ENCODE measurements at regions of chr19 and their contacts with region 1.

Region 1: DNA sequence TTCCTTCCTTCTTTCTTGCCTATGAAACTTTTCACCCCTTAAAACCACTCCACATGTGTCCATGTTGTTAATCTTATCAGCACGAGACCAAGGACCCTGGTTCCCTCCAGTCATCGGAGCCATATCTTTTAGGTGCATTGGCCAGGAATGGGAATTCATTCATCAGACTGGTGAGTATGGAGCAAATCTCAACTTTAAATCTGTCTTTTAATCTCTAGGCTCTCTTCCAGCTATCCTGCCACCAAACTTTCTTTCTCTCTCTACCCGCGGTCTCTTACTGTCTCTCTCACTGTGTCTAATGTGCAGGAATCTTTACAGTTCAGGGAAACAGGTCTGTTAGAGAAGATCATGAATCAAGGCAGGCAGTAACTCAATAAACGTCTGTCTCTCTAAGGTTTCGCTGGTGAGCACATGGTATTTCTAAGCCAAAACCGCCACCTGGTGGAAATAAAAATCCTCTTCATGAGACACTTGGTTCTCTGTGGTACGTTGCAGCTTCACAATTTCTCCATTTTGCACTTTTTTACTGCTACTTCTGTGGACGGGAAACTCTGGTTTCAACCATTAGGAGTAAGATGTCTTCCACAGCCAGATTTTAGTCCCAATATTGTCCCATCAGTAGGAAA is 16.1 kb downstream of the LGALS16 start:
- DNase-seq: peak; percentile 48
- H3K4me3 Mint-ChIP-seq: no peak overlapping the region
- H3K27ac Mint-ChIP-seq: no peak overlapping the region
- H3K4me1 Mint-ChIP-seq: peaks cover 26% of the 10 kb centered on the region
- H3K27me3 Mint-ChIP-seq: peaks cover 15% of the 10 kb centered on the region

Region 2: DNA sequence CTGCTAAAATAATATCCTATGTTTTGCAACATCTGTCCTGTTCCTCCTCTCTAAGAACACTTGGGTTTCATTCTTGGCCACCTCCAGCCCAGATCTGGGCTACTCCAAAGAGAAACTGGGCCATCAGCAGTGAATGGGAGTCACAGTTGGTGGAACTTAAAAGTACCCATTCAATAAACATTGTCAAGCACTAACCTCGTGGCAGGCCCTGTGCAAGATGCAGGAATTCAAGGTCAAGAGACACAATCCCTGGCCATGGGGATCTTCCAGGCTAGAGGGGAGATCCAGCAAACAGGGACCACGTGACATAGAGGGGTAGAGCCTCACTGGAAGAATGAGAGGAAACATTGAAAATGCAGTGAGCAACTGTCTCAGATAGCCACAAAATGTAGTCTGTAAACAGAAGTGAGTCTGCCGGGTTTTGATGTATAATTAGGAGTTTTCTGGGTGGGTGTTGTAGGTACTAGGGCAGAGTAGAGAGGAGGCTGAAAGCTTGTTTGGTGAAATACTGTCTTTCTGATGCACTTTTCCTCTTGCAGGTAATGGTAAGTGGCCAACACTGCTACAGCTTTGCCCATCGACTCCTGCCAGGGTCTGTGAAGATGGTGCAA is 117.0 kb before region 1 on chr19:
- CTCF ChIA-PET with region 1: interaction called, 54 read pairs
- POLR2A ChIA-PET with region 1: interaction called, 3 read pairs
- DNase-seq: no peak
- H3K4me3 Mint-ChIP-seq: no peak overlapping the region
- H3K27ac Mint-ChIP-seq: no peak overlapping the region
- H3K4me1 Mint-ChIP-seq: peaks cover 42% of the 10 kb centered on the region
- H3K27me3 Mint-ChIP-seq: no peaks in the 10 kb centered on the region

Region 3: GRCh38 chr19:39590265-39590664 is 81.6 kb before region 1 on chr19:
- CTCF ChIA-PET with region 1: no interaction called
- POLR2A ChIA-PET with region 1: no interaction called
- DNase-seq: no peak
- H3K4me3 Mint-ChIP-seq: no peak overlapping the region
- H3K27ac Mint-ChIP-seq: no peak overlapping the region
- H3K4me1 Mint-ChIP-seq: no peaks in the 10 kb centered on the region
- H3K27me3 Mint-ChIP-seq: peaks cover 9% of the 10 kb centered on the region

Measured in activated CD4-positive, alpha-beta memory T cell treated with anti-CD3 and anti-CD28 coated beads, Interleukin-2, amount 10 ng/mL, durations not matched to agents 7 days and 5 days (primary cell).